Gastrocnemius medialis (tissue), 4 donors: ENCODE measurements at regions of chr1 and their contacts with region 1.

Region 1: DNA sequence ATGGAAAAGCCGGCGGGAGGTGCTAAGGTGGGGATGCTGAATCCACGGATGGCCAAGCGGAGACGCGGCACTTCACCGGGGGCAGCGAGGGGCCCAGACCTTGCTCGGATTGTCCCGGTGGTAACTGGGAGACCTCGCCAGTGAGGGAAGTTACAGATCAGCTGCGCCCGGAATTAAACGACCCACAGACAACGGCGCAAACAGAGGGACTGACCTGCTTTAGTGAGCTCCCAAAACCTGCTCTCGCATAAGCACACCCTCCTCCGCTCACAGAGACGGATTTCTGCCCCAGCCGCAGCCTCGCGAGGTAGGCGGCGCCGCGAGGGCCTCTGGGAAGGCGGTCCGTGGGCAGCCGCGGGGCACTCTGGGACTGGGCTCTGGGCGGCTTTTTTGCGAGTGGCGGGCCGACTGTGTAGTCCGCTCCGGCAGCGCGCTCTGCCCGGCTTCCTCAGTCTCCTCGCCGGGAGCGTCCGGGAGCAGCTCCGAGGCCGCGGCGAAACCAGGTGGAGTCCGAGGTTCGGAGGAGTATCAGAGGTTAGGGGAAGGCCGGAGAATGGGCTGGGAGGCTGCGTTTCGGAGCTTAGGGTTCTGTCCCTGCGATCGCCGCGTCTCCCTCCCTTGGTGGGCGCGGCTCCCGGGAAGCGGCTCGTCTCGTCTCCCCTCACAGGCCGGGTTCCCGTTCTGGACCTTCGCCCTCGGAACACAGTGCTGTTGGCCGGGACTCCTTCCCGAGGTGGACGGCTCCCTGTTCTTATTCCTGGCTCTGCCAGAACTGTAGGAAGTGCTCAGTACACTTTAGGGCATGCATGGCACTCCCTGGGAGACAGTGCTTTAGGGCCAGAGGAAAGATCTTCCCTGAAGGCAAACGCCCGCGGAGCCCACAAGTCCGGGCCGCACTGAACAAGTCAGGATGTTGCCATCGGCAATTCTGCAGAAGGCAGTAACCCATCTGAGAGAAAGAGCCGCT is at the start of gene EXO5:
- DNase-seq: peak; percentile 47 to 60
- ATAC-seq: peak; percentile 93
- H3K4me3 ChIP-seq: peak within 1 kb of the TSS; percentile 79 to 89 (median 82)
- H3K27ac ChIP-seq: peak within 1 kb of the TSS; percentile 74 to 79 (median 76)
- H3K4me1 ChIP-seq: peaks cover 5 to 9% of the 10 kb centered on the region in 2 donors
- H3K27me3 ChIP-seq: no peaks in the 10 kb centered on the region
- CTCF ChIP-seq: no peak
- POLR2A ChIP-seq: no peak
- total RNA-seq, gene EXO5: 0.95 to 3.1 (median 1.7) TPM

Region 2: DNA sequence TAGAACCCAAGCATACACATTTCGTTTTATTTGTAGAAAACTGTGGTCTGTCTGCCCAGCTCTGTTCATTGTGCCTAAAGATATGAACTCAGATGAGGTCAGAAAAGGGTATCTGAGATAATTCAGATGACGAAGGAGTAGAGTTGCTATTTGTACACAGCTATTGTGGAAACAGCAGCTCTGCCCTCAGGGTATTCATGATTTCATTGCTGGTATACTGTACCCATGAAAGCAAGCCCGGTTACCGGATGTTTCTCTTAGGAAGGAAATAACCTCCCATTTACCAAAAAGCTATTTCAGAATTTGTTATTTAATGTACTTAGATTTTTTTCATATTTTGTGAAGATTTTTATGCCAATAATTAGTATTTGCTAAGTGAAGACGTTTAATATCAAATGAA is 97.4 kb before region 1 on chr1:
- in situ Hi-C with region 1: no loop called
- intact Hi-C with region 1: no loop called
- DNase-seq: no peak
- ATAC-seq: no peak
- H3K4me3 ChIP-seq: no peak overlapping the region
- H3K27ac ChIP-seq: no peak overlapping the region
- H3K4me1 ChIP-seq: no peaks in the 10 kb centered on the region
- H3K27me3 ChIP-seq: no peaks in the 10 kb centered on the region
- CTCF ChIP-seq: no peak
- POLR2A ChIP-seq: no peak

Region 3: GRCh38 chr1:40449684-40450494 is 58.8 kb before region 1 on chr1 and contains the start of gene ZFP69B:
- in situ Hi-C with region 1: no loop called
- intact Hi-C with region 1: loop called (anchors 1 kb)
- DNase-seq: peak; percentile 56 to 69
- ATAC-seq: peak; percentile 86 to 92
- H3K4me3 ChIP-seq: peak within 1 kb of the TSS; percentile 62 to 72 (median 66)
- H3K27ac ChIP-seq: peak within 1 kb of the TSS; percentile 8 to 54 (median 46)
- H3K4me1 ChIP-seq: peaks cover 4 to 6% of the 10 kb centered on the region in 2 donors
- H3K27me3 ChIP-seq: no peaks in the 10 kb centered on the region
- CTCF ChIP-seq: no peak
- POLR2A ChIP-seq: peak; percentile 24 to 36
- total RNA-seq, gene ZFP69B: 0.20 to 0.36 (median 0.35) TPM in 3 of 4 donors, not detected in the other

Region 4: GRCh38 chr1:40691538-40692428 is 183.1 kb after region 1 on chr1 and contains the start of gene NFYC:
- in situ Hi-C with region 1: no loop called
- intact Hi-C with region 1: no loop called
- DNase-seq: peak; percentile 97 to 98
- ATAC-seq: peak; percentile 96 to 97
- H3K4me3 ChIP-seq: peak within 1 kb of the TSS; percentile 83 to 92 (median 86)
- H3K27ac ChIP-seq: peak within 1 kb of the TSS; percentile 95 to 99 (median 98)
- H3K4me1 ChIP-seq: peaks cover 33 to 34% of the 10 kb centered on the region in 2 donors
- H3K27me3 ChIP-seq: no peaks in the 10 kb centered on the region
- CTCF ChIP-seq: peak in 1 of 5 experiments; percentile 21
- POLR2A ChIP-seq: peak; percentile 95 to 96
- total RNA-seq, gene NFYC: 45.3 to 58.6 (median 57.4) TPM